OCI-LY7 (cell line): ENCODE measurements at regions of chr6 and their contacts with region 1.

Region 1: DNA sequence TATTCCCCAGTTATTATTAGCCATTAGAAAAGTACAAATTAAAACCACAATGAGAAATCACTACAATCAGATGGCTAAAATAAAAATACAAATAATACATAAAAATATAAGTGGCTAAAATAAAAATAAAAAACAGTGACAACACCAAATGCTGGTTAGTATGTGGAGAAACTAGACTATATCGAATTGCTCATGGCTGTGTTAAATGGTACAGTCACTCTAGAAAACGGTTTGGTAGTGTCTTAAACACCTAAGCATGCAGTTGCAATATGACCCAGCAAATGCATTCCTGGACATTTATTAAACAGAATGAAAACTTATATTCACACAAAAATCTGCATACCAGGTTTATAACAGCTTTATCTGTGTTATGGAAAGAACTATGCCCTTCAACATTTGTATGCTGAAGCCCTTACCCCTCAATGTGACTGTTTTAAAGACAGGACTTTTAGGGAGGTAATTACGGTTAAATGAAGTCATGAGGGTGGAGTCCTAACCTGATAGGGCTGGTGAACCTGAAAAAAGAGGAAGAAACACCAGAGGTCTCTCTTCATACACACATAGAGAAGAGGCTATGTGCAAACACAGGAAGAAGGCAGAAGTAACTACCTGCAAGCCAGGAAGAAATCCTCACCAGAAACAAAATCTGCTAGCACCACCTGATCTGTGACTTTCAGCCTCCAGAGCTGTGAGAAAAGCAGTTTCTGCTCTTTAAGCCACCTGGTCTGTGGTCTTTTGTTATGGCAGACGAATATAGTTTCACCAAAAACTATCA is 84.9 kb downstream of the ASCC3 start:
- DNase-seq: peak; percentile 75
- H3K4me3 ChIP-seq: no peak overlapping the region
- H3K27ac ChIP-seq: peak overlapping the region; percentile 50
- H3K4me1 ChIP-seq: peaks cover 10% of the 10 kb centered on the region
- CTCF ChIP-seq: peak; percentile 65

Region 2: DNA sequence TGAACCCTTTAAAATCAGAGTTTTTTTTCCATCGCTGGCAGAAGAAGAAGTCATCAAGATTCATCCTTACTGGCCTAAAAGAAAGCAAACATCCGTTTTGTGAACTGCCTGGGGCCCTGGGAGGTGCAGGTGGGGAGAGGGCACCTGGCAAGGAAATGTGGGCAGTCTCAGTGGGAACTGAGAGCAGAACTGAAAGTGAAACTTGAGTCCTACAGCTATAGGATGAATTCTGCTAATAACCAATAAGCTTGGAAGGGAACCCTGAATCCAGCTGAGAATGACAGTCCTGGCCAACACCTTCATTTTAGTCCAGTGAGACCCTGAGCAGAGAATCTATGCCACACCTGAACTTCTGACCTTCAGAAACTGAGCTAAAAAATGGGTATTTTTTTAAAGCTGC is 214.9 kb after region 1 on chr6:
- CTCF ChIA-PET with region 1: no interaction called
- POLR2A ChIA-PET with region 1: no interaction called
- intact Hi-C with region 1: loop called (anchors 5 kb)
- DNase-seq: peak; percentile 90
- H3K4me3 ChIP-seq: peak overlapping the region; percentile 44
- H3K27ac ChIP-seq: peak overlapping the region; percentile 90
- H3K4me1 ChIP-seq: peaks cover 51% of the 10 kb centered on the region
- CTCF ChIP-seq: no peak

Region 3: GRCh38 chr6:101021504-101021903 is 225.3 kb after region 1 on chr6:
- CTCF ChIA-PET with region 1: no interaction called
- POLR2A ChIA-PET with region 1: no interaction called
- intact Hi-C with region 1: loop called (anchors 1 kb)
- DNase-seq: no peak
- H3K4me3 ChIP-seq: no peak overlapping the region
- H3K27ac ChIP-seq: no peak overlapping the region
- H3K4me1 ChIP-seq: no peaks in the 10 kb centered on the region
- CTCF ChIP-seq: no peak

Region 4: DNA sequence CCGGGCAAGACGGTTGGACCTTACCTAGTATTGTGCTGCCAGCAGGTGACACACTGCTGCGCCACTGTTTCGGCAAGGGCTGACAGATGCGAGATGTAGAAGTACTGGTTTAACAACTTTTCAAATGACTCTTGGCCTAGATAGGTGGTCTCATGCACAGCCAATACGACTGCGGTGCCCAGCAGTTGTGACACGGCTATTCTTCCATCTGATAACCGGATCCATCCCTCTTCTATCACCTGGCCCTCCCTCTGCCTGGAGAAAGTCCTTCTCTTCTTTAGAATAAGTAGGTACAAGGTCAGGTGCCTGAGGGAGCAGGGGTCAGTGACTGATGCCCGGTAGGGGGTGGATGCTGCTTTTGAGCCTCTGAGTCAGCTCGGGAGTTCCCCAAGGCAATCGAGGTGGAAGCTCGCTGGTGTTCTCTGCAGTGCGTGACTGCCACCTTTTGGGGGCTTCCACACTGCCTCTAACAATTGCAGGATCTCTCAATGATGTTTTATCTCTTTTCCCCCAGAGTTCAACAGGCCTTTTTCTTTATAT is 430.5 kb after region 1 on chr6:
- CTCF ChIA-PET with region 1: no interaction called
- POLR2A ChIA-PET with region 1: no interaction called
- intact Hi-C with region 1: loop called (anchors 5 kb)
- DNase-seq: peak; percentile 23
- H3K4me3 ChIP-seq: no peak overlapping the region
- H3K27ac ChIP-seq: no peak overlapping the region
- H3K4me1 ChIP-seq: no peaks in the 10 kb centered on the region
- CTCF ChIP-seq: peak; percentile 68

Region 5: GRCh38 chr6:101417900-101418299 is 621.7 kb after region 1 on chr6:
- CTCF ChIA-PET with region 1: no interaction called
- POLR2A ChIA-PET with region 1: no interaction called
- intact Hi-C with region 1: loop called (anchors 10 kb)
- DNase-seq: no peak
- H3K4me3 ChIP-seq: no peak overlapping the region
- H3K27ac ChIP-seq: no peak overlapping the region
- H3K4me1 ChIP-seq: no peaks in the 10 kb centered on the region
- CTCF ChIP-seq: no peak